AG04449 (cell line): ENCODE measurements at regions of chr21 and their contacts with region 1.

Region 1: GRCh38 chr21:44299458-44300261 is at the start of gene PFKL:
- DNase-seq: no peak
- H3K4me3 ChIP-seq: peak within 1 kb of the TSS; percentile 60
- CTCF ChIP-seq: no peak

Region 2: GRCh38 chr21:44272284-44272858 is 27.3 kb before region 1 on chr21:
- CTCF ChIA-PET with region 1: interaction called, 13 read pairs
- POLR2A ChIA-PET with region 1: no interaction called
- DNase-seq: no peak
- H3K4me3 ChIP-seq: no peak overlapping the region
- CTCF ChIP-seq: no peak

Region 3: GRCh38 chr21:44285509-44285992 is 14.1 kb before region 1 on chr21 and contains the start of gene AIRE:
- CTCF ChIA-PET with region 1: interaction called, 36 read pairs
- POLR2A ChIA-PET with region 1: no interaction called
- DNase-seq: no peak
- H3K4me3 ChIP-seq: peak within 1 kb of the TSS; percentile 20
- CTCF ChIP-seq: no peak

Region 4: GRCh38 chr21:44310628-44311511 is 11.2 kb after region 1 on chr21:
- CTCF ChIA-PET with region 1: interaction called, 26 read pairs
- POLR2A ChIA-PET with region 1: interaction called, 3 read pairs
- DNase-seq: no peak
- H3K4me3 ChIP-seq: no peak overlapping the region
- CTCF ChIP-seq: no peak

Region 5: GRCh38 chr21:44337941-44338895 is 38.6 kb after region 1 on chr21:
- CTCF ChIA-PET with region 1: interaction called, 10 read pairs
- POLR2A ChIA-PET with region 1: interaction called, 3 read pairs
- DNase-seq: peak; percentile 5
- H3K4me3 ChIP-seq: peak overlapping the region; percentile 53
- CTCF ChIP-seq: peak; percentile 51

Region 6: GRCh38 chr21:44677881-44678280 is 378.2 kb after region 1 on chr21:
- CTCF ChIA-PET with region 1: no interaction called
- POLR2A ChIA-PET with region 1: no interaction called
- DNase-seq: no peak
- H3K4me3 ChIP-seq: no peak overlapping the region
- CTCF ChIP-seq: no peak